ENCODE measurements at regions of chr2 and their contacts with region 1.

Region 1: GRCh38 chr2:108594132-108594981 is 60.1 kb downstream of the LIMS1 start:
- DNase-seq: no peak

Region 2: GRCh38 chr2:108565778-108566375 is 28.5 kb before region 1 on chr2:
- CTCF ChIA-PET with region 1: no interaction called
- POLR2A ChIA-PET with region 1: no interaction called
- DNase-seq: no peak

Region 3: GRCh38 chr2:108583903-108584520 is 10.3 kb before region 1 on chr2:
- CTCF ChIA-PET with region 1: interaction called, 19 read pairs
- POLR2A ChIA-PET with region 1: no interaction called
- DNase-seq: peak; percentile 72

Measured in HEK293T (cell line).